ENCODE measurements at regions of chr21 and their contacts with region 1.

Region 1: DNA sequence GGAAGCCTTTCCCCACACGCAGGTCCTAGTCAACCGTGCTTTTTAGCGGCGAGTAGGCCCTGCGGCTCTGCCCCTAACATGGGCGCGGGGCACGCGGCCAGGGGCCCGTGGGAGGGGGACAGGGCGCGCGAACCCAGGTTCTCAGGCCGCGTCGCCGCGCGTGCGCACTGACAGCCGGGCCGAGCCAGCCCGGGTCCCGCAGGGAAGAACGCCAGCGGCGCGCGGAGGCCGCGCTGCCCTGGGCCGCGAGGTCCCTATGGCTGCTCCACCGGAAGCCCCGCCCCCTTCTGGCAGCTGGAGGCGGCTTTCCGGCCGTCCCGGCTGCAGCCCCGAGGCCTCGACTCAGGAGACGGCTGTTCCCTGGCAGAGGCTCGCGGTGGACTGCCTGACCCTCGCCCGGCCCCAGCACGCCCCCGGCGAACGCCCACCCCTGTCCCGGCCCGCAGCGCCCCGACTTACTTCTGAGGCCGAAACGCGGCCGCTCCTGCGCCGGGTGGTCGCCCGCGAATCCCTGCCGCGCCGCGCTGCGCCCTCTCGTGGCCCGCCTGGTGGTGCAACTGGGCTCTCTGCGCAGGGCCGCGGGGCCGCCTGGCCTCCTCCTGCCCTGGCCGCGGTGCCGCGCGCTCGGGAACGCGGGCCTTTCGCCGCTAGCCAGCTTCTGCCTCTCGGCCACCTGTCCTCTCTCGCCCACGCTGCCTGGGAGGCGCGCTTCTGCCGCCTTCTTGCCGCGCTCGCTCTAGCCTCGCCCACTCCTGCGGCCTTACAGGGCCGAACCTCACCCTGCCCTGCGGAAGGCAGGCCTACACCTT is 16.6 kb upstream of the RIPPLY3 start:
- DNase-seq: peak; percentile 96
- ATAC-seq: peak; percentile 96

Region 2: GRCh38 chr21:36698981-36699891 is 290.7 kb before region 1 on chr21 and contains the start of gene SIM2:
- intact Hi-C with region 1: no loop called
- DNase-seq: peak; percentile 48
- ATAC-seq: no peak
- total RNA-seq, gene SIM2: not detected

Region 3: GRCh38 chr21:36934864-36935420 is 55.0 kb before region 1 on chr21:
- intact Hi-C with region 1: loop called (anchors 2 kb)
- DNase-seq: no peak
- ATAC-seq: no peak

Region 4: DNA sequence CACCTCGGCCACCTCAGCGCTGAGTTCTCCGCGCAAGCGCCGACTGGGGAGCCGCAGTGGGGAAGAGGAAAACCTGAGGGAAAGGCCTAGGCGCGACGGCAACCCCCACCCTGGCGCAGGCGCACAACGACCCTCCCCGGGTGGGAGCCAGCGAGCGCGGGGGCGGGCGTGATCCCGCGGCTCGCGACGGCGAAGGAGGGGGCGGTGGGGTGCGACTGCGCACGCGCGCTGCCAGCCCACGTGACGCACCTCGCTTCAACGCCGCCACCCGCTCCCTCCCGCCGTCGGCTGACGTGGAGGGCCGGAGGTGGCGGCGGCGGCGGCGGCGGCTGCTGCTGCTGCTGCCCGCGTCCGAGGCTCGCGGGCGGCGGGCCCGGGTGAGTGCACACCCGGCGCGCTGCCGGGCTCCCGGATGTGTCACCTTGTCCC is 83.1 kb after region 1 on chr21 and contains the starts of genes PIGP and TTC3:
- intact Hi-C with region 1: loop called (anchors 5 kb)
- DNase-seq: peak; percentile 98
- ATAC-seq: peak; percentile 95
- total RNA-seq, gene PIGP: 34.5 TPM
- total RNA-seq, gene TTC3: 146 TPM

Region 5: DNA sequence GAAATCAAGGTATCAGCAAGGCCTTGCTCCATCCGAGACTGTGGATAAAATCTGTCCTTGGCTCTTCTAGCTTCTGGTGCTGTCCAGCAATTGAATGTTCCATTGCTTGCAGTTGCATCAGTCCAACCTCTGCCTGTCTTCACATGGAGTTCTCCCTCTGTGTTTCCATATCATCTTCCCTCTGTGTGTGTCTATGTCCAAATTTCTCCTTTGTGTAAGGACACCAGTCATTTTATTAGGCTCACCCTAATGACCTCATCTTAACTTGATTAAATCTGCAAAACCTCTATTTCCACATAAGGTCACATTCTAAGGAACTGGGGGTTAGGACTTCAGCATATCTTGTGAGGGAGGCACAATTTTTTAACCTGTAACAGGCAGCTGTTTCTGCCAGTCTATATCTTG is 1424.2 kb after region 1 on chr21:
- intact Hi-C with region 1: no loop called
- DNase-seq: no peak
- ATAC-seq: no peak

Measured in sciatic nerve (tissue), 2 donors.